ENCODE measurements at regions of chr2 and their contacts with region 1.

Region 1: DNA sequence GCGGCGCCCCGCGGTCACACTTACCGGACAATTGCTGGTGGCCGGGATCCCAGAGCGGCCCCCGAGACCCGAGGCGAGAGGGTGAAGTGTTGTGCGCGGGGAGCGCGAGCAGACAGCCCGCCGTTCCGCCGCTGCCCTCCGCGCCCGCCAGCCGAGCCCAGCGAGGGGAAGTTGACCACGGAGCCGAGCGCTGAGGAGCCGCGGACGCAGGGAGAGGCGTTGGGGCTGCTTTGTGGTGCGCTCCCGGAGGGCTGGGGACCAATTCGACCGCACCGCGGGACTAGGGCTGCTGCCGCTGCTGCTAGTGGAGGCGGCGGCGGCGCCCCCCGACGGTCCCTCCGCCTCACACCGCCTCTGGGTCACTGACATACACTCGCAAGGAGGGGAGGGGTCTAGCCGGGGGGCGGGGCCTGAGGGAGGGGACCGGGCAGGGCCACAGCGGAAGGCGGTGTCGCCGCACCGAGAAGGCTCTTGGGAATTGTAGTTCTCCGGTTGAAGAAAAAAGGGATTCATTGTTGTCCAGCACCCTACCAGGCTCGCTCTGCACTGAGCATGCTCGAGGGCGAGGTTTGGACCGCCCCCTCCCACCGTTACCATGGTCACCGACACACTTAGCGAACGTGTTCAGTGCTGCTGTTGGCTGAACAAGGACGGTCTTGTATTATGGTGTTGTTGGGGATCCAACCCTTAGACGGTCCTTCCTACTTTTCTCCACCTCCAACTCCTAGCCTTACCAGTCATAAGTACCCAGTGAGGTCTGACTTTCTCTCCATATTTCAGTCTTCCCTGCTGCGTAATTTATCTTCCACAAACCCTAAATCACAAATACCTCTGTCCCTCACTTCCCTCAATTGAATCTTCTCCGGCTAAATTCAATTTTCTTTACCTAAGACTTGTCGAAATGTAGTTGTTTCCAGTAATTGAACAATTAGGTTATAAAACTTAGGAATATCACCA is at the start of gene PELI1:
- DNase-seq: peak; percentile 97
- H3K4me3 Mint-ChIP-seq: peak within 1 kb of the TSS; percentile 99
- H3K27ac Mint-ChIP-seq: peak within 1 kb of the TSS; percentile 96
- H3K4me1 Mint-ChIP-seq: peaks cover 19% of the 10 kb centered on the region
- H3K27me3 Mint-ChIP-seq: no peaks in the 10 kb centered on the region
- total RNA-seq, gene PELI1: 31.9 and 33.8 TPM in 2 replicates

Region 2: DNA sequence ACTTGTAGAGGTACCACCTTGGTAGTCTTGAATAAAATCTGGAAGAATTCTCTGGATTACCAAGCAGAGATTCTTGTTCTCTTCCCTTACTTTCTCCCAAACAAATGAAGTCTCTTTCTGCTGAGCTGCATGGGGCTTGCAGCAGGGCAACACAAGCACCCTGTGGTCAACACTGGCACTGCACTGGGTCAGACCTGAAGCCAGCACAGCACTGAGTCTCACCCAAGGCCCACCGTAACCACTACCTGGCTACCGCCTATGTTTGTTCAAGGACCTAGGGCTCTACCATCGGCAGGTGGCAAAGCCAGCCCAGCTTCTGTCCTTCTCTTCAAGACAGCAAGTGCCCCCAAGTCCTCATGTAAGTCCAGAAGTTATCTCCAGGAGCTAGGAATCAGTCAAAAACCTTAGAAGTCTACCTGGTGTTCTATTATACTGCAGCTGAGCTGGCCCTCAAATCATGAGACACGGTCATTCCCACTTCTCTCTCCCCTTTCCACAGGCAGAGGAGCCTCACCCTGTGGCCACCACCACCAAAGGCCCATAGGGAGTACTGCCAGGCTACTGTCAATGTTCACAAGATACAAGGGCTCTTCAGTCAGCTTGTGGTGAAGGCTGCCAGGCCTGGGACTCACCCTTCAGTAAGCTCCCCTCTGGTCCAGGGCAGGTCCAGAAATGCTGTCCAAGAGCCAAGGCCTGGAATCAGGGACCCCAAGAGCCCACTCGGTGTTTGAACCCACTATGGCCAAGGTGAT is 143.5 kb before region 1 on chr2:
- intact Hi-C with region 1: no loop called
- DNase-seq: peak; percentile 52
- H3K4me3 Mint-ChIP-seq: no peak overlapping the region
- H3K27ac Mint-ChIP-seq: no peak overlapping the region
- H3K4me1 Mint-ChIP-seq: no peaks in the 10 kb centered on the region
- H3K27me3 Mint-ChIP-seq: no peaks in the 10 kb centered on the region

Region 3: GRCh38 chr2:64036034-64036705 is 108.2 kb before region 1 on chr2:
- intact Hi-C with region 1: loop called (anchors 2 kb)
- DNase-seq: peak; percentile 82
- H3K4me3 Mint-ChIP-seq: peak overlapping the region; percentile 22
- H3K27ac Mint-ChIP-seq: peak overlapping the region; percentile 76
- H3K4me1 Mint-ChIP-seq: peaks cover 42% of the 10 kb centered on the region
- H3K27me3 Mint-ChIP-seq: no peaks in the 10 kb centered on the region

Region 4: DNA sequence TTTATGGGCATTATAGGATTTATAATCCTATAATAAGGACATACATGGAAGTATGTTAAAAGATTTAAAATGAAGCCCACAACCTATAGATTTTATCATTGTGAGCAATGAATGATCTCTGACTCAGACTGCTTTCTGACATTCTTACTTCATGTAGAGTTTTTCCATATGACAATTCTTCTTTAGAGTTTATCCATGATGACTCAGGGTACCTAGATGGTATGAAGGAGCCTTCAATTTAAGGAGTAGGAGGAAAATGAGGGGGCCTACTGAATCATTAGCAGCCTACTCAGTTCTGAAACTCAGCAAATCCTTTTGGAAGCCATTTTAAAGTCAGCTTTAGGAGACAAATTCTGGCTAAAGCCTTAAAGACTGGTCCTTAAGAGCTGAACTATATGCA is 10.5 kb before region 1 on chr2:
- intact Hi-C with region 1: loop called (anchors 1 kb)
- DNase-seq: no peak
- H3K4me3 Mint-ChIP-seq: peak overlapping the region; percentile 60
- H3K27ac Mint-ChIP-seq: peak overlapping the region; percentile 89
- H3K4me1 Mint-ChIP-seq: peaks cover 72% of the 10 kb centered on the region
- H3K27me3 Mint-ChIP-seq: no peaks in the 10 kb centered on the region

Region 5: GRCh38 chr2:64295326-64296139 is 151.2 kb after region 1 on chr2:
- intact Hi-C with region 1: loop called (anchors 1 kb)
- DNase-seq: no peak
- H3K4me3 Mint-ChIP-seq: peak overlapping the region; percentile 33
- H3K27ac Mint-ChIP-seq: peak overlapping the region; percentile 82
- H3K4me1 Mint-ChIP-seq: peaks cover 19% of the 10 kb centered on the region
- H3K27me3 Mint-ChIP-seq: peaks cover 19% of the 10 kb centered on the region